ENCODE measurements at regions of chr1 and their contacts with region 1.

Region 1: GRCh38 chr1:100351095-100351891 is 1.0 kb upstream of the CDC14A start:
- DNase-seq: peak; percentile 70 to 91 (median 84)
- ATAC-seq: peak; percentile 70 to 72
- H3K4me3 Mint-ChIP-seq: peak overlapping the region; percentile 95 to 100 (median 97)
- H3K27ac Mint-ChIP-seq: peak overlapping the region; percentile 94 to 100 (median 98)
- H3K4me1 Mint-ChIP-seq: peaks cover 30 to 45% (median 35%) of the 10 kb centered on the region in 4 donors
- H3K27me3 Mint-ChIP-seq: peaks cover 0 to 3% (median 0%) of the 10 kb centered on the region in 5 donors

Region 2: GRCh38 chr1:100265931-100266740 is 85.2 kb before region 1 on chr1 and contains the start of gene RTCA:
- POLR2A ChIA-PET with region 1: interaction called, 25 read pairs
- DNase-seq: peak; percentile 91 to 98 (median 94)
- ATAC-seq: peak; percentile 95
- H3K4me3 Mint-ChIP-seq: peak within 1 kb of the TSS; percentile 96 to 100 (median 100)
- H3K27ac Mint-ChIP-seq: peak within 1 kb of the TSS; percentile 95 to 99 (median 98)
- H3K4me1 Mint-ChIP-seq: peaks cover 25 to 59% (median 57%) of the 10 kb centered on the region in 4 donors
- H3K27me3 Mint-ChIP-seq: no peaks in the 10 kb centered on the region
- polyA plus RNA-seq, gene RTCA: 13.8 to 18.0 (median 15.2) TPM

Region 3: GRCh38 chr1:100387657-100388350 is 36.5 kb after region 1 on chr1:
- POLR2A ChIA-PET with region 1: interaction called, 31 read pairs
- DNase-seq: peak in 1 of 10 donors; percentile 29
- ATAC-seq: no peak
- H3K4me3 Mint-ChIP-seq: peak overlapping the region; percentile 55 to 84 (median 78)
- H3K27ac Mint-ChIP-seq: peak overlapping the region; percentile 78 to 96 (median 92)
- H3K4me1 Mint-ChIP-seq: peaks cover 27 to 92% (median 85%) of the 10 kb centered on the region in 4 donors
- H3K27me3 Mint-ChIP-seq: no peaks in the 10 kb centered on the region

Region 4: GRCh38 chr1:100400404-100400803 is 49.1 kb after region 1 on chr1:
- POLR2A ChIA-PET with region 1: interaction called, 51 read pairs
- DNase-seq: peak; percentile 35 to 88 (median 71)
- ATAC-seq: peak; percentile 84 to 89
- H3K4me3 Mint-ChIP-seq: peak overlapping the region; percentile 43 to 87 (median 77)
- H3K27ac Mint-ChIP-seq: peak overlapping the region; percentile 62 to 97 (median 94)
- H3K4me1 Mint-ChIP-seq: peaks cover 45 to 91% (median 83%) of the 10 kb centered on the region in 4 donors
- H3K27me3 Mint-ChIP-seq: no peaks in the 10 kb centered on the region

Region 5: DNA sequence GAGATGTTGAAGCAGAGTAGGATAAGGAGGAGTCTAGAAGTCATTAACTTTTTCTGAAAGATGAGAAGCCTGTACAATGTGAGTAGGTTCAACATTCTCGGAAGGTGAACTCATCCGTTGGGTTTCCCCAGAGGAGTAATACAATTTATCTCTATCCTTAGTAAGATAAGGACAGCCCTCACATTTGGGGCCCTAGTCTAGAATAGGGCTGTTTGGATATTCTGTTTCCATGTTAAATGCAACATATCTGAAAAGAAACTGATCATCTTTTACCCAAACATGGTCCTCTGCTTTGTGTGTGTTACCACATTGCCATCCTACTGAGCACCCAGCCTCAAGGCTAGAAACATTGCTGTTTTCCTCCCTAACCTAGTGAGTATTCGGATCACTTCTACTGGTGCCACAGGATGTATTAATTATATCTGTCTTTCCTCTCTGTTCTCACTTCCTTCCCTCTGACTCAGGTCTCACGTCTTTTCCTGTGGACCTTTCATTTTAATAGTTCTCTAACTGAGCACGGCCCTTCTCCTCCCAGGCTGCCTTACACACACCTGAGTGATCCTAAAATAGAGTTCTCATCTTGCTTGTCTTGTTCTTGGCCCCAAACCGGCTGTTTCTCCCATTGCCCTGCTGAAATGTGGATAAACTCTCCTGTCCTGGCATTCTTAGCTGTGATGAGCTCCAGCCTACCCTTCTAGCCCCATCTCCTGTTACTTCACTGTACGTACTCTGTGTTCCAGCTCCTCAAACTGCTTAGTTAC is 92.7 kb after region 1 on chr1:
- POLR2A ChIA-PET with region 1: interaction called, 24 read pairs
- DNase-seq: peak in 4 of 10 donors; percentile 23 to 47 (median 34)
- ATAC-seq: peak; percentile 18 to 21
- H3K4me3 Mint-ChIP-seq: peak overlapping the region; percentile 63 to 88 (median 74)
- H3K27ac Mint-ChIP-seq: peak overlapping the region; percentile 96 to 99 (median 98)
- H3K4me1 Mint-ChIP-seq: peaks cover 19 to 89% (median 75%) of the 10 kb centered on the region in 4 donors
- H3K27me3 Mint-ChIP-seq: no peaks in the 10 kb centered on the region

Region 6: DNA sequence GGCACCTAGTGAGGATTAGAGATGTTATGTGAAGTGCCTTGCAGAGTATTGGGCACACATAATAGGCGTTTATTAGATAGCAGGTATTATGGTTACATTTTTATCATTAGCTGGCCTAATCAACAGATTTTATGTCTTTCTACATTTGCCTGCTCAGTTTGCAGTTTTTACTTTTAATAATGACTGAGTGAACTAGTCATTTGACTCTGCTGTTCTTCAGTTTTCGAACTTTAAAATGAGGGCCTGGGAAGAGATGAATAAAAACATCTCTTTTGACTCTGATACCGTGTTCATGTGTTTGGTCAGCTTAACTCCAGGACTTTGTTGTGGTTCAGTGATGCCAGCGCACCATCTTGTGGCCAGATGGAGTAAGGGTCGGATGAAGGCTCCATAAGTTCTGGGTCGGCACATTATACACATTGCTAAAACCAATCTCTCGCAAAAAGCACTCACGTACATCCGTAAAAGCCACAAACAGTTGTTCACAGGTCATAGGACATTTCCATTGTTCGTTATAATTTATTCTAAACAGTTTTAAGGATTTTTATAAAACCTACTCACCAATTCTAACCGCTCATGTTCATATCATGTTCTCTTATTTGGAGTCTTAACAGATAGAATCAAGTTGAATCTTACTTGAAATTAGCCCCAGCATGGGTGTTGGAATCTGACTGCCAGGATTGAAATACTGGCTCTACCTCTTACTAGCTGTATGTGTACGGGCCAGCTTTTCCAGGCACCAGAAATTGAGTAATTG is 108.2 kb after region 1 on chr1:
- POLR2A ChIA-PET with region 1: interaction called, 28 read pairs
- DNase-seq: peak; percentile 32 to 78 (median 54)
- ATAC-seq: peak; percentile 81 to 82
- H3K4me3 Mint-ChIP-seq: peak overlapping the region in 4 of 10 donors; percentile 3 to 60 (median 38)
- H3K27ac Mint-ChIP-seq: peak overlapping the region; percentile 26 to 93 (median 84)
- H3K4me1 Mint-ChIP-seq: peaks cover 21 to 46% (median 35%) of the 10 kb centered on the region in 4 donors
- H3K27me3 Mint-ChIP-seq: no peaks in the 10 kb centered on the region

Measured in naive thymus-derived CD8-positive, alpha-beta T cell (primary cell).